ENCODE measurements at regions of chr12 and their contacts with region 1.

Region 1: GRCh38 chr12:7638760-7639555 is 26.8 kb downstream of the APOBEC1 start:
- DNase-seq: peak; percentile 40 to 89 (median 77)
- ATAC-seq: peak; percentile 67
- H3K4me3 ChIP-seq: peak overlapping the region; percentile 35 to 39
- H3K4me3 Mint-ChIP-seq: peak overlapping the region; percentile 69
- H3K27ac ChIP-seq: peak overlapping the region; percentile 30 to 40
- H3K27ac Mint-ChIP-seq: peak overlapping the region; percentile 73
- H3K4me1 ChIP-seq: peaks cover 32% of the 10 kb centered on the region
- H3K4me1 Mint-ChIP-seq: peaks cover 38% of the 10 kb centered on the region
- H3K27me3 ChIP-seq: no peaks in the 10 kb centered on the region
- H3K27me3 Mint-ChIP-seq: peaks cover 4% of the 10 kb centered on the region
- CTCF ChIP-seq: peak; percentile 79

Region 2: DNA sequence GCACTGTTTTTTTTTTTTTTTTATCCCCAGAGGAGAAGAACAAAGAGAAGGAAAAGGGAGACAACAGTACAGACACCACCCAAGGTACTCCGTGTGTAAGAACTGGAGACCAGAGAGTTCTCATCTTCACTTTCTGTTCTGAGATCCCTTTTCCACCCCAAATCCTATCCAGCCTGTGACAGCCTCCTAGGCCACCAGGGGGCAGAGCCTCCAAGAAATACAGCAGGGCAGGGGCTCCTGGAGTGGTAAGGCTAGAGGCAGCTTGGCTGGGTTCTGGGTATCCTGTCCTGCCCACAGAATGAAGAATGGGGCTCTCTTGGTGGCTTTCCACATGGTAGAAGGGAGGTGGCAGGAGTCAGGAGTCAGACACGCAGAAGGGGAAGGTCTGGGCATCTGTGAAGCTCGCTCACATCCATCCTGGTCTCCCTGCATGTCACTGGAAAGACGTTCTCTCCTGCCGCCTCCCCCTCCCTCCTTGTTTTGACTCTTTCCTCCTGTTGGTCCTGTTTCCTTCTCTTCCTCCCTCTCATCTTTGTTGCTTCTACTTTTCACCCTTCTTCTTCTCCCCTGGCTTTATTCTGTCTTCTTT is 496.8 kb before region 1 on chr12:
- CTCF ChIA-PET with region 1: interaction called, 5 read pairs
- POLR2A ChIA-PET with region 1: no interaction called
- intact Hi-C with region 1: loop called in 1 of 2 experiments (anchors 1 kb)
- DNase-seq: peak; percentile 20 to 68 (median 57)
- ATAC-seq: peak; percentile 90
- H3K4me3 ChIP-seq: no peak overlapping the region
- H3K4me3 Mint-ChIP-seq: no peak overlapping the region
- H3K27ac ChIP-seq: no peak overlapping the region
- H3K27ac Mint-ChIP-seq: no peak overlapping the region
- H3K4me1 ChIP-seq: no peaks in the 10 kb centered on the region
- H3K4me1 Mint-ChIP-seq: no peaks in the 10 kb centered on the region
- H3K27me3 ChIP-seq: no peaks in the 10 kb centered on the region
- H3K27me3 Mint-ChIP-seq: no peaks in the 10 kb centered on the region
- CTCF ChIP-seq: no peak

Region 3: GRCh38 chr12:7188562-7189397 is 450.2 kb before region 1 on chr12:
- CTCF ChIA-PET with region 1: interaction called, 4 read pairs
- POLR2A ChIA-PET with region 1: interaction called, 7 read pairs
- intact Hi-C with region 1: loop called in 1 of 2 experiments (anchors 1 kb)
- DNase-seq: peak; percentile 36 to 76 (median 63)
- ATAC-seq: peak; percentile 32
- H3K4me3 ChIP-seq: peak overlapping the region; percentile 85 to 86
- H3K4me3 Mint-ChIP-seq: peak overlapping the region; percentile 95
- H3K27ac ChIP-seq: peak overlapping the region; percentile 66 to 90
- H3K27ac Mint-ChIP-seq: peak overlapping the region; percentile 97
- H3K4me1 ChIP-seq: peaks cover 26% of the 10 kb centered on the region
- H3K4me1 Mint-ChIP-seq: peaks cover 44% of the 10 kb centered on the region
- H3K27me3 ChIP-seq: no peaks in the 10 kb centered on the region
- H3K27me3 Mint-ChIP-seq: no peaks in the 10 kb centered on the region
- CTCF ChIP-seq: peak; percentile 63

Region 4: DNA sequence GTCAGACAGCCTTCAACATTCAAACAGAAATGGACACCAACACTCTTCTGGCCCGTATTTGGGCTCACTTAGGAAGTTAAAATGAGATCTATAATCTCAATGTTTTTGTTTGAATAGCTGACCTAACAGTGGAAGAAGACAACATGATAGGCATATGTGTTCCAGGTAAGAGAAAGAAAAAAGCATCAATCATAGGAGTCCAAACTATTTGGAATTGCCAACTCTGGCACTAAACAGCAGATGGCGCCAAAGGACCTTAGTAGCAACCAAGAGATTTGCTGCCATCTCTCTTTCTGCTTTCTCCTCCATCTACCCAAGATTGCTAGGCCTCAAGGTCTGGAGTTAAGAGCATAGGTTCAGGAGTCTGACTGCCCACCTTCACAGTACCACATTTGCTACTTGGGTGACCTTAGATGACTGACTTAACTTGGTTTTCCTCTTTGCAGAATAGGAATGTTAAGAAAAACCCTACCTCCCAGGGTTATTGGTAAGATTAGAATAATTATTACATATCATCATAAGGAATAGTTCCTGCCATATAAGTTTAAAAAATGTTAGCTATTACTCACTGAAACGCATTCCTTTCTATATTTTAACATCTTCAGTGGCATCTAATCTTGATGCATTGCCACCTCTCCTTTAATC is 419.2 kb before region 1 on chr12:
- CTCF ChIA-PET with region 1: interaction called, 67 read pairs
- POLR2A ChIA-PET with region 1: no interaction called
- intact Hi-C with region 1: loop called (anchors 1 kb)
- DNase-seq: peak; percentile 47 to 82 (median 76)
- ATAC-seq: peak; percentile 70
- H3K4me3 ChIP-seq: no peak overlapping the region
- H3K4me3 Mint-ChIP-seq: no peak overlapping the region
- H3K27ac ChIP-seq: no peak overlapping the region
- H3K27ac Mint-ChIP-seq: no peak overlapping the region
- H3K4me1 ChIP-seq: no peaks in the 10 kb centered on the region
- H3K4me1 Mint-ChIP-seq: no peaks in the 10 kb centered on the region
- H3K27me3 ChIP-seq: no peaks in the 10 kb centered on the region
- H3K27me3 Mint-ChIP-seq: no peaks in the 10 kb centered on the region
- CTCF ChIP-seq: peak; percentile 84

Region 5: GRCh38 chr12:7460375-7461259 is 178.3 kb before region 1 on chr12:
- CTCF ChIA-PET with region 1: interaction called, 6 read pairs
- POLR2A ChIA-PET with region 1: no interaction called
- intact Hi-C with region 1: loop called (anchors 1 to 2 kb)
- DNase-seq: peak; percentile 13 to 73 (median 58)
- ATAC-seq: peak; percentile 57
- H3K4me3 ChIP-seq: no peak overlapping the region
- H3K4me3 Mint-ChIP-seq: no peak overlapping the region
- H3K27ac ChIP-seq: no peak overlapping the region
- H3K27ac Mint-ChIP-seq: no peak overlapping the region
- H3K4me1 ChIP-seq: no peaks in the 10 kb centered on the region
- H3K4me1 Mint-ChIP-seq: no peaks in the 10 kb centered on the region
- H3K27me3 ChIP-seq: no peaks in the 10 kb centered on the region
- H3K27me3 Mint-ChIP-seq: peaks cover 7% of the 10 kb centered on the region
- CTCF ChIP-seq: peak; percentile 41

Region 6: GRCh38 chr12:7512553-7512952 is 126.4 kb before region 1 on chr12:
- CTCF ChIA-PET with region 1: no interaction called
- POLR2A ChIA-PET with region 1: no interaction called
- intact Hi-C with region 1: no loop called
- DNase-seq: peak in 1 of 9 experiments; percentile 10
- ATAC-seq: no peak
- H3K4me3 ChIP-seq: no peak overlapping the region
- H3K4me3 Mint-ChIP-seq: no peak overlapping the region
- H3K27ac ChIP-seq: no peak overlapping the region
- H3K27ac Mint-ChIP-seq: no peak overlapping the region
- H3K4me1 ChIP-seq: no peaks in the 10 kb centered on the region
- H3K4me1 Mint-ChIP-seq: no peaks in the 10 kb centered on the region
- H3K27me3 ChIP-seq: no peaks in the 10 kb centered on the region
- H3K27me3 Mint-ChIP-seq: peaks cover 10% of the 10 kb centered on the region
- CTCF ChIP-seq: no peak

Region 7: GRCh38 chr12:7583571-7583970 is 55.4 kb before region 1 on chr12:
- CTCF ChIA-PET with region 1: interaction called, 39 read pairs
- POLR2A ChIA-PET with region 1: no interaction called
- intact Hi-C with region 1: loop called (anchors 1 kb)
- DNase-seq: no peak
- ATAC-seq: no peak
- H3K4me3 ChIP-seq: no peak overlapping the region
- H3K4me3 Mint-ChIP-seq: no peak overlapping the region
- H3K27ac ChIP-seq: no peak overlapping the region
- H3K27ac Mint-ChIP-seq: no peak overlapping the region
- H3K4me1 ChIP-seq: no peaks in the 10 kb centered on the region
- H3K4me1 Mint-ChIP-seq: no peaks in the 10 kb centered on the region
- H3K27me3 ChIP-seq: peaks cover 0 to 3% of the 10 kb centered on the region in 2 experiments
- H3K27me3 Mint-ChIP-seq: peaks cover 17% of the 10 kb centered on the region
- CTCF ChIP-seq: no peak

Measured in CD8-positive, alpha-beta T cell (primary cell).